ENCODE measurements at regions of chr20 and their contacts with region 1.

Region 1: GRCh38 chr20:45798935-45799642 is 7.3 kb downstream of the DNTTIP1 start:
- DNase-seq: peak; percentile 42
- ATAC-seq: peak; percentile 99
- H3K4me3 ChIP-seq: no peak overlapping the region
- H3K27ac ChIP-seq: no peak overlapping the region
- H3K4me1 ChIP-seq: no peaks in the 10 kb centered on the region
- H3K27me3 ChIP-seq: no peaks in the 10 kb centered on the region
- CTCF ChIP-seq: peak; percentile 73
- POLR2A ChIP-seq: no peak
- RAD21 ChIP-seq: peak; percentile 70

Region 2: GRCh38 chr20:43942661-43943290 is 1856.3 kb before region 1 on chr20:
- CTCF ChIA-PET with region 1: no interaction called
- POLR2A ChIA-PET with region 1: no interaction called
- dilution Hi-C with region 1: no loop called
- in situ Hi-C with region 1: loop called (anchors 25 kb)
- intact Hi-C with region 1: no loop called
- DNase-seq: peak; percentile 85
- ATAC-seq: peak; percentile 31
- H3K4me3 ChIP-seq: no peak overlapping the region
- H3K27ac ChIP-seq: peak overlapping the region; percentile 77
- H3K4me1 ChIP-seq: peaks cover 39% of the 10 kb centered on the region
- H3K27me3 ChIP-seq: no peaks in the 10 kb centered on the region
- CTCF ChIP-seq: no peak
- POLR2A ChIP-seq: no peak
- RAD21 ChIP-seq: no peak

Region 3: GRCh38 chr20:44475694-44476560 is 1323.2 kb before region 1 on chr20 and contains the start of gene TTPAL:
- CTCF ChIA-PET with region 1: no interaction called
- POLR2A ChIA-PET with region 1: no interaction called
- dilution Hi-C with region 1: no loop called
- in situ Hi-C with region 1: loop called (anchors 25 kb)
- intact Hi-C with region 1: no loop called
- DNase-seq: peak; percentile 82
- ATAC-seq: peak; percentile 97
- H3K4me3 ChIP-seq: peak within 1 kb of the TSS; percentile 87
- H3K27ac ChIP-seq: peak within 1 kb of the TSS; percentile 90
- H3K4me1 ChIP-seq: peaks cover 4% of the 10 kb centered on the region; the same call in 1 of the 2 replicates
- H3K27me3 ChIP-seq: no peaks in the 10 kb centered on the region
- CTCF ChIP-seq: peak; percentile 38
- POLR2A ChIP-seq: peak; percentile 96
- RAD21 ChIP-seq: peak; percentile 34
- total RNA-seq, gene TTPAL: 8.2 and 11.9 TPM in 2 replicates

Region 4: DNA sequence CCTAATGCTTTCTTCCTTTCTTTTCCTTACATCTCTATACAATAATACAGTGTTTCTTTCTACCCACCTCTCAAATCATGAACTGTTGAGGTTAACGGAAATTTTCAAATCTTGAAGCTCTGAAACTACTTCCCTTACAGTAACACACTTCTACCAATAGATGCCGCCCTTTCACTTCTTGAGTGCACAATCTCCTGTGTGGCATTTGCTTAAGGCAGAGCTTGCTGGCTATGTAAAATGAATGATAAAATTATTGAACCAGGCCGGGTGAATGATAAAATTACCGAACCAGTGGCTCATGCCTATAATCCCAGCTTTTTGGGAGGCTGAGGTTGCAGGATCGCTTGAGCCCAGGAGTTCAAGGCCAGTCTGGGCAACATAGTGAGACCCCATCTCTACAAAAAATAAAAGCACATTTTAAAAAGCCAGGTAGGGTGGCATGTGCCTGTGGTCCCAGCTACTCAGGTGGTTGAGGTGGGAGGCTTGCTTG is 755.0 kb before region 1 on chr20:
- CTCF ChIA-PET with region 1: no interaction called
- POLR2A ChIA-PET with region 1: no interaction called
- dilution Hi-C with region 1: no loop called
- in situ Hi-C with region 1: loop called (anchors 25 kb)
- intact Hi-C with region 1: no loop called
- DNase-seq: peak; percentile 86
- ATAC-seq: peak; percentile 94
- H3K4me3 ChIP-seq: no peak overlapping the region
- H3K27ac ChIP-seq: no peak overlapping the region
- H3K4me1 ChIP-seq: peaks cover 10% of the 10 kb centered on the region
- H3K27me3 ChIP-seq: no peaks in the 10 kb centered on the region
- CTCF ChIP-seq: peak; percentile 94
- POLR2A ChIP-seq: no peak
- RAD21 ChIP-seq: peak; percentile 92

Region 5: GRCh38 chr20:45629496-45630100 is 169.5 kb before region 1 on chr20 and contains the start of gene WFDC10A:
- CTCF ChIA-PET with region 1: no interaction called
- POLR2A ChIA-PET with region 1: no interaction called
- dilution Hi-C with region 1: no loop called
- in situ Hi-C with region 1: no loop called
- intact Hi-C with region 1: no loop called
- DNase-seq: peak; percentile 49
- ATAC-seq: peak; percentile 97
- H3K4me3 ChIP-seq: no peak within 1 kb of the TSS
- H3K27ac ChIP-seq: no peak within 1 kb of the TSS
- H3K4me1 ChIP-seq: no peaks in the 10 kb centered on the region
- H3K27me3 ChIP-seq: no peaks in the 10 kb centered on the region
- CTCF ChIP-seq: peak; percentile 51
- POLR2A ChIP-seq: no peak
- RAD21 ChIP-seq: peak; percentile 43
- total RNA-seq, gene WFDC10A: not detected in 2 replicates

Region 6: GRCh38 chr20:45701104-45701503 is 98.0 kb before region 1 on chr20:
- CTCF ChIA-PET with region 1: no interaction called
- POLR2A ChIA-PET with region 1: no interaction called
- dilution Hi-C with region 1: no loop called
- in situ Hi-C with region 1: no loop called
- intact Hi-C with region 1: no loop called
- DNase-seq: no peak
- ATAC-seq: no peak
- H3K4me3 ChIP-seq: no peak overlapping the region
- H3K27ac ChIP-seq: no peak overlapping the region
- H3K4me1 ChIP-seq: no peaks in the 10 kb centered on the region
- H3K27me3 ChIP-seq: no peaks in the 10 kb centered on the region
- CTCF ChIP-seq: no peak
- POLR2A ChIP-seq: no peak
- RAD21 ChIP-seq: no peak

Region 7: GRCh38 chr20:45963059-45964005 is 164.2 kb after region 1 on chr20:
- CTCF ChIA-PET with region 1: interaction called, 3 read pairs
- POLR2A ChIA-PET with region 1: no interaction called
- dilution Hi-C with region 1: no loop called
- in situ Hi-C with region 1: no loop called
- intact Hi-C with region 1: loop called (anchors 1 kb)
- DNase-seq: peak; percentile 33
- ATAC-seq: peak; percentile 48; the same call in 1 of the 2 replicates
- H3K4me3 ChIP-seq: no peak overlapping the region
- H3K27ac ChIP-seq: no peak overlapping the region
- H3K4me1 ChIP-seq: no peaks in the 10 kb centered on the region
- H3K27me3 ChIP-seq: no peaks in the 10 kb centered on the region
- CTCF ChIP-seq: 0 out of 2 replicates have a peak, but pooled peaks have one; percentile 29
- POLR2A ChIP-seq: no peak
- RAD21 ChIP-seq: peak; percentile 36